Right ventricle myocardium inferior (tissue), 1 donor: ENCODE measurements at regions of chr2 and their contacts with region 1.

Region 1: GRCh38 chr2:235595422-235596010 is 101.7 kb downstream of the AGAP1 start:
- DNase-seq: no peak
- ATAC-seq: peak; percentile 56

Region 2: DNA sequence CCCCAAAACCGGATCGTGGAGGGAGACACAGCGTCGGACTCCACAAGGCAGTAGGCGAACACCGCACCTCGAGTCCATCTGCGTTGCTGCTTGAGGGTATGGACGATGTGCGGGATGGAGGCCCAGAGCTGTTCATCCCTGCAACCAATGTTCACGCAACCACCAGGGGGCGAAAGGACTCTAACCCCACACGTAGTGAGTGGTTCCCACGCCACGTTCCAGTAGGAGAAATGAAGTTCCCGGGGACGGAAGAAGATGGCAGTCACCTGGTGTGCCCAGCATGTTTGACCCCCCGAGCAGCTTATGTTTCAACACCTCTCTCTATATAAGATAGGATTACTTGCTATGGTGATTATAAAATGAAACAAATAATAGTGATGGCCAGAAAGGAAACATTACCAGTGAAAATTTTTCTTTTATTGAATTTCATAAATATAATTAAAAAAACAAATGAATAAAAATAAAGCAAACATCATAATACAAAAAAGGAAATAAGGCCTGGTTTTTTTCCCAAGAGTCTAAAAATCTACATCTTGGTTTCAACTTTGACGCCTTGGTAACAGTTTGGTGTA is 459.4 kb before region 1 on chr2:
- intact Hi-C with region 1: loop called (anchors 1 kb)
- DNase-seq: peak; percentile 84
- ATAC-seq: peak; percentile 80

Region 3: GRCh38 chr2:235433860-235434259 is 161.7 kb before region 1 on chr2:
- intact Hi-C with region 1: loop called (anchors 10 kb)
- DNase-seq: no peak
- ATAC-seq: peak; percentile 92

Region 4: DNA sequence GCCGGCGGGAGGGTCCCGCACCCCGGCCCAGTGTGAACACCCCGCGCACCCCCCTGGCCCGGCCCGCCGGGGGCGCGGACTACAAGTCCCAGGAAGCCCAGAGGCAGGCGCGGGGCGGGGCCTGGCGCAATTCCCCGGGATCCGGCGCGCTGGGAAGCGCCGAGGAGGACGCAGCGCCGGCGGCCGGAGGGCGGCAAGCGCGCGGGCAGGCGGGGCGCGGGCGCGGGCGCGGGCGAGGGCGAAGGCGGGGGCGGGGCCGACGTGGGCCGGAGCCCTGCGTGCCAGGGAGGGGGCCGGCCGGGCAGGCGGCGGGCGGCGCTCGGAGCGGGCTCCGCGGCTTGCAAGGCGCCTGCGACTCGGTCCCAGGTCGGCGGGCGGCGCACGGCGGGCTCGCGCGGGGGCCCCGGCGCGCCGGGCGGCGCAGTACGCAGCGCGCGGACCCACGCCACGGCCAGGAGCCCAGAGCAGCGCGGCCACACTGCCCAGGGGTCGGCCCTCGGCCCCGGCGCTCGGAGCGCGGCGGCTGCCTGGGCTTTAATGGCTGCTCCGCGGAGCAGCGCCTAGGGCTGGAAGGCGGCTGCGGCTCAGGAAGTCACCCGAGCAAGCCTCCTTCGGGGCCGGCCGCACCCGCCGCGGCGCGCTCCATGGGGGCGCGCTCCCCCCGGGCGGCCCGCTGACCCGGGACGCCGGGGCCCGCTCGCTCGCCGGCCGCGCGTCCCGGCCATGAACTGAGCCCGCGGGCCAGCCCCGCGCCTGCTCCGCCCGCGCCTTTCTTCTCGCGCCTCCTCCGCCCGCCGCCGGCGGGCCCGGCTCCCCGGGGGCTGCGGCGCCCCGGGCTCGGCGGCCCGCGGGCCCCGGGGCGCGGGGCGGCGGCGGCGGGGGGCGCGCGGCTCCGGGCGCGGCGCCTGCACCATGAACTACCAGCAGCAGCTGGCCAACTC is 101.5 kb before region 1 on chr2 and contains the start of gene AGAP1:
- intact Hi-C with region 1: loop called (anchors 5 kb)
- DNase-seq: peak; percentile 89
- ATAC-seq: peak; percentile 93
- total RNA-seq, gene AGAP1: 23.5 TPM

Region 5: GRCh38 chr2:235511187-235511661 is 84.3 kb before region 1 on chr2:
- intact Hi-C with region 1: no loop called
- DNase-seq: no peak
- ATAC-seq: no peak

Region 6: DNA sequence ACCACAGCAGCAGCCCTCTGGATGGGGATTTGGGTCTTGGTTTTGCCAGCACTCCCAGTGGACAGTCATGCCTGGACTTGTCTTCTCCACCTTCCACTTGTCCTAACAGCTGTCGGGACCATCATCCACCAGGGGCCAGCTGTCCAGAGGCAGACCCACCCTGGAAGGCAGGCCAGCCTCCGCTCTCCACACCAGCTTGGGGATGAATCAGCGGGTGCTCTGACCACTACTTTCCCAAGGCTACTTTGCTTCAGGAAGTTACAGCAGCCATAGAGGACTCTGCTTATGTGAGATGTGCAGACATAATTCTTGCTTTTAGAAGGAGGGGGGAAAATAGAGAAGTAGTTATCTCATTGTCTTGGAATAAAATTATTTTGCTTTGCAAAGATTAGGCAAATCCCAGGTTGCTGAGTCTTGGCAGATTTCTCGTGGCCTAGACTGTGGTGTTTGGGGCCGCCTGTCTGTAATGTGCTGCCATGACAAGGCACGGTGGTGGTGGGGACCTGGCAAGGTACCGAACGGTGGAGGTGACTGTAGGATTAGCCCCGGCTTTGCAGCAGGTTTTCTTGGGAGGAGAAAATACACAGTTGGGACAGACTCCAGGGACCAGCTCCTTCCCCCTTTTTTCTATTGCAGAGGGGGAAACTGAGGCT is 47.1 kb after region 1 on chr2:
- intact Hi-C with region 1: loop called (anchors 5 kb)
- DNase-seq: no peak
- ATAC-seq: peak; percentile 46

Region 7: GRCh38 chr2:235669269-235669831 is 73.8 kb after region 1 on chr2:
- intact Hi-C with region 1: loop called (anchors 2 kb)
- DNase-seq: peak; percentile 80
- ATAC-seq: peak; percentile 73

Region 8: GRCh38 chr2:235746257-235747084 is 151.0 kb after region 1 on chr2:
- intact Hi-C with region 1: loop called (anchors 1 kb)
- DNase-seq: no peak
- ATAC-seq: peak; percentile 88

Region 9: DNA sequence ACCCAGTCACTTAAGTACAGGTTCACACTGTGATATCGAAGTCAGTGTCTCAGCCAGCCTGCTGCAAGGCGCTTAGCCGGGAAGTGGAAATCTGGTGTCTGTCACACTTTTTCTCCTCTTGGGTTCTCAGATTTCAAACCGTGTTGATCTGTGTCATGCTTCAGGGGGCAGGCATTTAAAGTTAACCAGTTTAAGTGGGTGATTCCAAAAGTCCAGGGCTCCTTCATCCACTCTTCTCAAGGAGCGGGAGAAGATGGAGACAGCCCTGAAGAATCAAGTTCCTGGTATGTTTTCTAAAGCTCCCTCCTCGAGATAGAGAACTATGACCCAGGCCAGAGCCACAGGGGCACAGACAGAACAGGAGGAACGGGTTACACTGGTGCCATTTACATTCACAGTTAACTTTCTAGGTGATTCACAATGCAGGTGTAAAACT is 241.0 kb after region 1 on chr2:
- intact Hi-C with region 1: no loop called
- DNase-seq: no peak
- ATAC-seq: no peak